Activated B cell treated with CpG ODN at 0.5 μM for 24 hours (primary cell): ENCODE measurements at regions of chr4 and their contacts with region 1.

Region 1: GRCh38 chr4:98467627-98468072 is 190.8 kb downstream of the TSPAN5 start:
- DNase-seq: peak; percentile 25
- ATAC-seq: peak; percentile 94
- H3K4me3 Mint-ChIP-seq: peak overlapping the region; percentile 61
- H3K27ac Mint-ChIP-seq: no peak overlapping the region
- H3K4me1 Mint-ChIP-seq: peaks cover 7% of the 10 kb centered on the region
- H3K27me3 Mint-ChIP-seq: no peaks in the 10 kb centered on the region
- CTCF ChIP-seq: peak; percentile 12

Region 2: DNA sequence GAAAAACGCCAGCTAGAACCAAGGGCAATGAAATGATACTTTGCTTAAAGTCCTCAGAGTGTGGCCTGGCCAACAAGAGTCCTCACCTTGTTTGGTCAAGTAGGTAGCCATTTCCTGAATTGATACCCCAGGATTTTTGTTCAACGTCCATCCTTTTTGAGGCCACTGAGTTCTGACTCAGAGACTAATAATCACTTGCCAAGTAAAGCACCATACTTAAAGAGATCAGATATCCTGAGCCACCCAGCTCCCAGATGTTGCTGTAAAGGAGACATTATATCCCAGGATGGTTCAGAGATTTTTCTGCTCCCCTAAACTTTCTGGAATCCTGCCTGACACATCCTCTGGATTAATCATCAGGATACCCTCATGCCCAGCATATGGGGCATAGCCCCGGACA is 15.6 kb before region 1 on chr4:
- CTCF ChIA-PET with region 1: interaction called, 11 read pairs
- POLR2A ChIA-PET with region 1: no interaction called
- intact Hi-C with region 1: no loop called
- DNase-seq: no peak
- ATAC-seq: no peak
- H3K4me3 Mint-ChIP-seq: no peak overlapping the region
- H3K27ac Mint-ChIP-seq: no peak overlapping the region
- H3K4me1 Mint-ChIP-seq: peaks cover 29% of the 10 kb centered on the region
- H3K27me3 Mint-ChIP-seq: no peaks in the 10 kb centered on the region
- CTCF ChIP-seq: no peak

Region 3: GRCh38 chr4:98828801-98829200 is 361.2 kb after region 1 on chr4:
- CTCF ChIA-PET with region 1: interaction called, 3 read pairs
- POLR2A ChIA-PET with region 1: no interaction called
- intact Hi-C with region 1: loop called (anchors 1 kb)
- DNase-seq: no peak
- ATAC-seq: no peak
- H3K4me3 Mint-ChIP-seq: no peak overlapping the region
- H3K27ac Mint-ChIP-seq: no peak overlapping the region
- H3K4me1 Mint-ChIP-seq: no peaks in the 10 kb centered on the region
- H3K27me3 Mint-ChIP-seq: peaks cover 5% of the 10 kb centered on the region
- CTCF ChIP-seq: no peak

Region 4: DNA sequence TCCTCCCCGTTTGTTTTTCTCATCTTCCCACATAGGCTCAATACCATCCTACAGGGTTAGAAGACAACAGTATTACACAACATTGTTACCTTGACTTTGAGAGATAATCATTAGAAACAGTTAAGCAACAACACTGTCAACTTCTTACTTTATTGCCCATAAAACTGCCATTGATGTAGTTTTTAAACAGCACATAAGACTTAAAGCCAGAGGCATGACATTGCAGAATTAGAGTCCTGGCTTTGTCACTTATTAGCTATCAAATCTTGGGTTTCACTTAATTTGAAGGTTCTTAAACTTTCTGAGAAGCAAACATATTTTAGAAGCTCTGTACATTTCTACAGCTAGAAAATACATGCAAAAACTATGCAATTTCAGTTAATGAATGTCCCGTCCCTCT is 419.5 kb after region 1 on chr4:
- CTCF ChIA-PET with region 1: no interaction called
- POLR2A ChIA-PET with region 1: no interaction called
- intact Hi-C with region 1: loop called (anchors 5 kb)
- DNase-seq: no peak
- ATAC-seq: no peak
- H3K4me3 Mint-ChIP-seq: no peak overlapping the region
- H3K27ac Mint-ChIP-seq: no peak overlapping the region
- H3K4me1 Mint-ChIP-seq: peaks cover 2% of the 10 kb centered on the region
- H3K27me3 Mint-ChIP-seq: no peaks in the 10 kb centered on the region
- CTCF ChIP-seq: no peak

Region 5: GRCh38 chr4:99054428-99054994 is 586.9 kb after region 1 on chr4:
- CTCF ChIA-PET with region 1: interaction called, 45 read pairs
- POLR2A ChIA-PET with region 1: no interaction called
- intact Hi-C with region 1: loop called (anchors 1 kb)
- DNase-seq: no peak
- ATAC-seq: no peak
- H3K4me3 Mint-ChIP-seq: no peak overlapping the region
- H3K27ac Mint-ChIP-seq: no peak overlapping the region
- H3K4me1 Mint-ChIP-seq: peaks cover 9% of the 10 kb centered on the region
- H3K27me3 Mint-ChIP-seq: no peaks in the 10 kb centered on the region
- CTCF ChIP-seq: no peak

Region 6: GRCh38 chr4:99405433-99406115 is 937.9 kb after region 1 on chr4:
- CTCF ChIA-PET with region 1: interaction called, 13 read pairs
- POLR2A ChIA-PET with region 1: no interaction called
- intact Hi-C with region 1: loop called (anchors 1 kb)
- DNase-seq: no peak
- ATAC-seq: peak; percentile 69
- H3K4me3 Mint-ChIP-seq: no peak overlapping the region
- H3K27ac Mint-ChIP-seq: no peak overlapping the region
- H3K4me1 Mint-ChIP-seq: peaks cover 7% of the 10 kb centered on the region
- H3K27me3 Mint-ChIP-seq: peaks cover 1% of the 10 kb centered on the region
- CTCF ChIP-seq: no peak

Region 7: DNA sequence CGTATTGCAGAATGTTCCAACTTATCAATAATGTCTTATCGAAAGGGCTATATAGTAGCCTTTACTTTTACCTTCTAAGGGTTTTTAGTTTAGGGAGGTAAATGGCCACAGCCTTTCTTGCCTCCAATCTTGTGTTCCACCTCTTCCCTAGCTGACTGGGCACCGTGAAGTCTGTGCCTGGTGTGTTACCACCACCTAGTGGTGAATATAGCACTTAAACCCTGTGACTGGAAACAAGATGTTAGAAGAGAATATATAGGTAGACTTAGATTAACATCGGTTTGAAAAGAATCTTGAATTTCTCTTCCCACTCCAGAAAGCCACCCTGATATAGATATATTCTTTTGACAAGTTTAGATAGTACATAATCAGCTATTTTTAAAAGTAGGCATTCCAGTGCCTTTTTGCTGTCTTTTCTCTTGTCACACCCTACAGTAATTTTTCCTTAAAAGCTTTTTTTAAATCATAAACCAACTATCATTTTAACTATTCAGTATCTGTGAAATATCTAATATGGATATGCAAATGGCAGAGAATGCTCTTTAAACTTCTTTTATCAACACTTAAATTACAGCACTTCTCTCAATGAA is 995.3 kb after region 1 on chr4:
- CTCF ChIA-PET with region 1: interaction called, 8 read pairs
- POLR2A ChIA-PET with region 1: no interaction called
- intact Hi-C with region 1: loop called (anchors 2 kb)
- DNase-seq: no peak
- ATAC-seq: peak; percentile 64
- H3K4me3 Mint-ChIP-seq: no peak overlapping the region
- H3K27ac Mint-ChIP-seq: no peak overlapping the region
- H3K4me1 Mint-ChIP-seq: no peaks in the 10 kb centered on the region
- H3K27me3 Mint-ChIP-seq: peaks cover 10% of the 10 kb centered on the region
- CTCF ChIP-seq: no peak